IMR-90 (cell line): ENCODE measurements at regions of chr1 and their contacts with region 1.

Region 1: DNA sequence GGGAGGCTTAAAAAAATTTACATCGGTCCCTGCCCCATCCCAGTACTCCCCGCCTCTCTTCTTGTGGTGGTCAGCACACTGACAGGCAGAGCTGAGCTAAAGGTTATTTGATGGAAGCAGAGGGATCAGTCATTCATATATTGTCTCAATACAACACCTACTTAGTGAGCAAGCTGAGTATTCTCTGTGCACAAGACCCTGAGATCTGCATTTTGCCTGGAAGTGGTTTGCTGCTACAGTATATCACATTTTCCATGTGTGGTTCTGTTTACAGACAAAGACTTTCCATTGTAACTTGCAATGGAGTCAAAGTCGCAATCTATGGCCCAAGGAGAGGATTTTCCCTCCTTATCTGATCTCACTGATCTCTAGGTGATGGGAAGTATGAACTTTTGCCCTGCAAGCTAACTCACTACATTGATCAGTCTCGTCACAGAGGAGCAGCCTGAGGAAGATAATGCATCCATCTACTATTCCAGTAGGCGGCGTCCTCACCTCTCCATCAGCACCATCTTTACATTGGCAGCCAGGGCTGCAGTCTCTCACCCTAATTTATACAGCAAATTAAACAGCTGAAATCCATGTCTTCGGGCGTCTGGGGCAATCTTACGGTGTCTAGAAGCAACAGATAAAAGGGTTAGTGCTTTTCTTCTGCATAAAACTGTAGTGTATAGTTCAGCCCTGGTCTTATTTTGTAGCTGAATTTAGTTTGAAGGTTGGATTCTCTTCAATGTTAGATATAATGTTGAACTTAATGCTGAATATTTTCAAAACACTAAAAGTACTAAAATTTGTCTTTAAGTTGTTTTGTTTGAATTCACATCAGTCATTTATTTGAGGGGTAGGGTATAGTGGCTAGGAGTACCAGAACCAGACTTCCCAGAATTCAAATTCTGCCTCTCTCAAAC is 3.2 kb upstream of the TRAF5 start:
- DNase-seq: peak; percentile 65
- ATAC-seq: peak; percentile 59
- H3K4me3 ChIP-seq: no peak overlapping the region
- H3K27ac ChIP-seq: no peak overlapping the region
- H3K4me1 ChIP-seq: peaks cover 5% of the 10 kb centered on the region
- H3K27me3 ChIP-seq: no peaks in the 10 kb centered on the region
- CTCF ChIP-seq: peak; percentile 86
- POLR2A ChIP-seq: no peak
- RAD21 ChIP-seq: peak; percentile 88

Region 2: DNA sequence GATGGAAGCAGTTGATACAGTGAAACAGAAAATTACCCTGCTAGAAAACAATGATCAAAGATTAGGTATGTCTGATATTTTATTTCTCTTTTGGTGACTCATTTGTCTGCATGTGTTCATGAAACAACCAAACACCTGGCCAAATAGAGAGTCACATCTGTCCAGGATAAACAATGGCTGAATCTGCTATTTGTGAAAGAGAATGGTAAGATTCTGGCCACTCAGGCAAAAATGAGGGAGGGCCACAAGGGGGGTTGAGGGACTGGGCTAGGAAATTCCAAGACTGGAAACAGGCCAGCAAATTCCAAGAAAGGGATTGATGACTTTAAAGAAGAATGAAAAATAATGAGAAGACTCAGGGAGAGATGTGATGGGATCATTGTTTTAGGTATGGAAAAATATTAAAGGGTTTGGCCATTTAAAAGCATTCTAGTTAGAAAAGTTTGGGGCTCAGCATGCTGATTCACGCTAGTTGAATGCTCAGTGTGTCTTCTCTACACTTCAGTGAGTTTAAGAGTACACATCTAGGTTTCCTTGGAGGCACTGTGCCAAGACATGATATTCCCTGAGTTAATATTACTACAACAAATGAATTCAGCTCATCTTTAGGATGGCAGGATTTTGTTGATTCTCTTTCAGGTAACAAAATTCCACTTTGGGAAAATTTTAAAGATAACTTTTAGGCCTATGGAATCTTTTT is 48.1 kb after region 1 on chr1:
- CTCF ChIA-PET with region 1: no interaction called
- POLR2A ChIA-PET with region 1: no interaction called
- dilution Hi-C with region 1: no loop called
- in situ Hi-C with region 1: no loop called
- intact Hi-C with region 1: no loop called
- DNase-seq: peak; percentile 65
- ATAC-seq: no peak
- H3K4me3 ChIP-seq: no peak overlapping the region
- H3K27ac ChIP-seq: no peak overlapping the region
- H3K4me1 ChIP-seq: no peaks in the 10 kb centered on the region
- H3K27me3 ChIP-seq: no peaks in the 10 kb centered on the region
- CTCF ChIP-seq: no peak
- POLR2A ChIP-seq: no peak
- RAD21 ChIP-seq: no peak

Region 3: GRCh38 chr1:211382714-211383480 is 59.5 kb after region 1 on chr1:
- CTCF ChIA-PET with region 1: no interaction called
- POLR2A ChIA-PET with region 1: no interaction called
- dilution Hi-C with region 1: no loop called
- in situ Hi-C with region 1: no loop called
- intact Hi-C with region 1: loop called (anchors 2 kb)
- DNase-seq: peak; percentile 91
- ATAC-seq: peak; percentile 98
- H3K4me3 ChIP-seq: peak overlapping the region; percentile 89
- H3K27ac ChIP-seq: peak overlapping the region; percentile 85
- H3K4me1 ChIP-seq: no peaks in the 10 kb centered on the region
- H3K27me3 ChIP-seq: no peaks in the 10 kb centered on the region
- CTCF ChIP-seq: no peak
- POLR2A ChIP-seq: peak; percentile 95
- RAD21 ChIP-seq: no peak

Region 4: GRCh38 chr1:211514030-211514754 is 190.8 kb after region 1 on chr1:
- CTCF ChIA-PET with region 1: interaction called, 9 read pairs
- POLR2A ChIA-PET with region 1: interaction called, 7 read pairs
- dilution Hi-C with region 1: no loop called
- in situ Hi-C with region 1: loop called (anchors 5 kb)
- intact Hi-C with region 1: loop called (anchors 1 kb)
- DNase-seq: peak; percentile 84
- ATAC-seq: peak; percentile 94
- H3K4me3 ChIP-seq: no peak overlapping the region
- H3K27ac ChIP-seq: no peak overlapping the region
- H3K4me1 ChIP-seq: peaks cover 5% of the 10 kb centered on the region; the same call in 1 of the 2 replicates
- H3K27me3 ChIP-seq: no peaks in the 10 kb centered on the region
- CTCF ChIP-seq: peak; percentile 89
- POLR2A ChIP-seq: no peak
- RAD21 ChIP-seq: peak; percentile 89

Region 5: GRCh38 chr1:211648980-211649934 is 325.8 kb after region 1 on chr1:
- CTCF ChIA-PET with region 1: interaction called, 6 read pairs
- POLR2A ChIA-PET with region 1: no interaction called
- dilution Hi-C with region 1: no loop called
- in situ Hi-C with region 1: loop called (anchors 5 kb)
- intact Hi-C with region 1: no loop called
- DNase-seq: peak; percentile 35
- ATAC-seq: peak; percentile 77; the same call in 1 of the 2 replicates
- H3K4me3 ChIP-seq: no peak overlapping the region
- H3K27ac ChIP-seq: no peak overlapping the region
- H3K4me1 ChIP-seq: peaks cover 6% of the 10 kb centered on the region
- H3K27me3 ChIP-seq: no peaks in the 10 kb centered on the region
- CTCF ChIP-seq: peak; percentile 54
- POLR2A ChIP-seq: no peak
- RAD21 ChIP-seq: peak; percentile 59